Naive thymus-derived CD8-positive, alpha-beta T cell (primary cell): ENCODE measurements at regions of chr5 and their contacts with region 1.

Region 1: GRCh38 chr5:73565139-73565968 is at the starts of genes ANKRA2 and UTP15:
- DNase-seq: peak; percentile 96 to 99 (median 98)
- ATAC-seq: peak; percentile 91
- H3K4me3 Mint-ChIP-seq: peak within 1 kb of the TSS; percentile 89 to 100 (median 98)
- H3K27ac Mint-ChIP-seq: peak within 1 kb of the TSS; percentile 97 to 100 (median 99)
- H3K4me1 Mint-ChIP-seq: peaks cover 18 to 60% (median 52%) of the 10 kb centered on the region in 4 donors
- H3K27me3 Mint-ChIP-seq: peaks cover 0 to 3% (median 0%) of the 10 kb centered on the region in 5 donors
- polyA plus RNA-seq, gene ANKRA2: 20.9 to 22.8 (median 21.8) TPM
- polyA plus RNA-seq, gene UTP15: 5.3 to 9.8 (median 7.9) TPM

Region 2: GRCh38 chr5:73498057-73499008 is 67.0 kb before region 1 on chr5 and contains the start of gene BTF3:
- POLR2A ChIA-PET with region 1: interaction called, 36 read pairs
- DNase-seq: peak; percentile 83 to 98 (median 92)
- ATAC-seq: peak; percentile 90 to 93
- H3K4me3 Mint-ChIP-seq: peak within 1 kb of the TSS; percentile 92 to 100 (median 98)
- H3K27ac Mint-ChIP-seq: peak within 1 kb of the TSS; percentile 98 to 100 (median 99)
- H3K4me1 Mint-ChIP-seq: peaks cover 22 to 55% (median 47%) of the 10 kb centered on the region in 4 donors
- H3K27me3 Mint-ChIP-seq: peaks cover 2 to 13% (median 4%) of the 10 kb centered on the region in 5 donors
- polyA plus RNA-seq, gene BTF3: 812 to 913 (median 878) TPM

Region 3: GRCh38 chr5:74367241-74367733 is 801.9 kb after region 1 on chr5:
- POLR2A ChIA-PET with region 1: no interaction called
- DNase-seq: no peak
- ATAC-seq: no peak
- H3K4me3 Mint-ChIP-seq: no peak overlapping the region
- H3K27ac Mint-ChIP-seq: no peak overlapping the region
- H3K4me1 Mint-ChIP-seq: peaks cover 0 to 2% (median 0%) of the 10 kb centered on the region in 4 donors
- H3K27me3 Mint-ChIP-seq: peaks cover 2 to 17% (median 5%) of the 10 kb centered on the region in 5 donors